ENCODE measurements at regions of chr11 and their contacts with region 1.

Region 1: DNA sequence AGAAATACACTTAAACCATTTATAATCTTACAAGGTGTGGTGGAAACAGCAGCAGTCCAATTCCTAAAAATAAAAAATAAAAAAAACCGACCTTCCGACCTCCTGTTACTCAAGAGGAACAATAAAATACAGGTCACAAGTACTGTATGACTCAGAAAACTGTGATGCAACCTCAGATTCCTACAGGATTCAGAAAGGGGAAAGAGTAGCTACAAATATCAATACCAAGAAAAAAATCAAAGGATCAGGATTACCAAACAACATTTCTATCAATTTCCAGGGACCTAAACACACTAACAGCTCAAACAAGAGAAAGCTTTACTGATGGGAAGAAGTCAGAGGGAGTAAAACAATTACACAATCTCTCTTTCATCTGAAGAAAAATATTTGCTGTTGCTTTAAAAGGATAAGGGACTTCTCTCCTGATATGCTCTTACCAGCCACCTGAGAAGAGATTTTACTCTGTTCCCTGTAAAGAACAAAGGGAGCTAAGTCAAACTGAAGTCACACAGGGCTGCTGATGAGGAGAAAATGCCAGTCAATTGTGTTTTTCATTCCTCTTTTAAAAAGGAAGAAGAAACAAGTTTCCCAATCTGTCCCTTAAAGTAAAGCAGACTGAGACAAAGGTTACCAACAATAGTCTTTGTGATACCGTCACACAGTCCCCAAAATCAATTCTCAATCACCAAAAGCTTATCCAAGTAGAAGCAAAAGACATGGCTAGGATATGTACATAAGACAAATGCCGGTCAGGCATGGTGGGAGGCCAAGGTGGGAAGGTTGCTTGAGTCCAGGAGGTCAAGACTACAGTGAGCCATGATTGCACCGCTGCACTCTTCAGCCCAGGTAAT is 39.4 kb downstream of the AMBRA1 start:
- DNase-seq: peak; percentile 17 to 97
- H3K4me3 ChIP-seq: peak overlapping the region; percentile 43; the same call in 1 of the 2 replicates
- H3K27ac ChIP-seq: peak overlapping the region; percentile 95
- H3K4me1 ChIP-seq: peaks cover 65% of the 10 kb centered on the region
- H3K27me3 ChIP-seq: no peaks in the 10 kb centered on the region
- CTCF ChIP-seq: no peak

Region 2: GRCh38 chr11:46593550-46594373 is 39.3 kb after region 1 on chr11 and contains the start of gene AMBRA1:
- CTCF ChIA-PET with region 1: no interaction called
- POLR2A ChIA-PET with region 1: interaction called, 3 read pairs
- intact Hi-C with region 1: loop called (anchors 1 kb)
- DNase-seq: peak; percentile 83 to 90
- H3K4me3 ChIP-seq: peak within 1 kb of the TSS; percentile 79
- H3K27ac ChIP-seq: peak within 1 kb of the TSS; percentile 43
- H3K4me1 ChIP-seq: peaks cover 30% of the 10 kb centered on the region
- H3K27me3 ChIP-seq: no peaks in the 10 kb centered on the region
- CTCF ChIP-seq: no peak
- total RNA-seq, gene AMBRA1: 41.4 and 41.9 TPM in 2 replicates

Region 3: GRCh38 chr11:47130543-47130942 is 576.1 kb after region 1 on chr11:
- CTCF ChIA-PET with region 1: no interaction called
- POLR2A ChIA-PET with region 1: no interaction called
- intact Hi-C with region 1: no loop called
- DNase-seq: no peak
- H3K4me3 ChIP-seq: no peak overlapping the region
- H3K27ac ChIP-seq: no peak overlapping the region
- H3K4me1 ChIP-seq: no peaks in the 10 kb centered on the region
- H3K27me3 ChIP-seq: no peaks in the 10 kb centered on the region
- CTCF ChIP-seq: no peak